ENCODE measurements at regions of chr9 and their contacts with region 1.

Region 1: GRCh38 chr9:27701587-27701986 is 128.3 kb upstream of the C9orf72 start:
- DNase-seq: peak in 2 of 14 experiments; percentile 7 to 18
- ATAC-seq: no peak
- H3K4me3 ChIP-seq: no peak overlapping the region
- H3K4me3 Mint-ChIP-seq: no peak overlapping the region
- H3K27ac ChIP-seq: no peak overlapping the region
- H3K27ac Mint-ChIP-seq: no peak overlapping the region
- H3K4me1 ChIP-seq: no peaks in the 10 kb centered on the region
- H3K4me1 Mint-ChIP-seq: no peaks in the 10 kb centered on the region
- H3K27me3 ChIP-seq: no peaks in the 10 kb centered on the region
- H3K27me3 Mint-ChIP-seq: no peaks in the 10 kb centered on the region
- CTCF ChIP-seq: no peak

Region 2: GRCh38 chr9:27654629-27655285 is 46.8 kb before region 1 on chr9:
- CTCF ChIA-PET with region 1: no interaction called
- POLR2A ChIA-PET with region 1: no interaction called
- intact Hi-C with region 1: loop called in 1 of 2 experiments (anchors 5 kb)
- DNase-seq: no peak
- ATAC-seq: no peak
- H3K4me3 ChIP-seq: no peak overlapping the region
- H3K4me3 Mint-ChIP-seq: no peak overlapping the region
- H3K27ac ChIP-seq: no peak overlapping the region
- H3K27ac Mint-ChIP-seq: no peak overlapping the region
- H3K4me1 ChIP-seq: no peaks in the 10 kb centered on the region
- H3K4me1 Mint-ChIP-seq: no peaks in the 10 kb centered on the region
- H3K27me3 ChIP-seq: no peaks in the 10 kb centered on the region
- H3K27me3 Mint-ChIP-seq: no peaks in the 10 kb centered on the region
- CTCF ChIP-seq: no peak

Region 3: DNA sequence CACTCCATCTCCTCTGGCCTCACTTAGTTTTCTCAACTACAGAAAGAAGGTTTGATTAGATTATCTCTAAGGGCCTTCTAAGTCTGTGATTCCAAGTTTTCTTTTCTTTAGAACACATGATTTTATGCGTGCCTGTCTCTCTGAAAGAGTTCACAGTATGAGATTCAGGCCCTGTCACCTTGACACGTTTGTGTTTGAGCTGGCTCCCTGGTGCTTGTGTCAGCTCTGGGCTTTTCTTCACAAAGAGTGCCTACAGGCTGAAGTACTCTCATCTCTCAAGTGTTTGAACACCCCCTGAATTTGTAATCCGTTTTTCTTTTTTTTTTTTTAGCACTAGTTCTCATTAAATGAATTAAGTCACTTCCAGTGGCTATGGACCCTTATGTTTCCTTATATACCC is 178.6 kb after region 1 on chr9:
- CTCF ChIA-PET with region 1: no interaction called
- POLR2A ChIA-PET with region 1: no interaction called
- intact Hi-C with region 1: no loop called
- DNase-seq: no peak
- ATAC-seq: no peak
- H3K4me3 ChIP-seq: no peak overlapping the region
- H3K4me3 Mint-ChIP-seq: no peak overlapping the region
- H3K27ac ChIP-seq: no peak overlapping the region
- H3K27ac Mint-ChIP-seq: no peak overlapping the region
- H3K4me1 ChIP-seq: no peaks in the 10 kb centered on the region
- H3K4me1 Mint-ChIP-seq: no peaks in the 10 kb centered on the region
- H3K27me3 ChIP-seq: no peaks in the 10 kb centered on the region
- H3K27me3 Mint-ChIP-seq: no peaks in the 10 kb centered on the region
- CTCF ChIP-seq: no peak

Measured in CD4-positive, alpha-beta T cell (primary cell).